A673 (cell line): ENCODE measurements at regions of chr1 and their contacts with region 1.

Region 1: DNA sequence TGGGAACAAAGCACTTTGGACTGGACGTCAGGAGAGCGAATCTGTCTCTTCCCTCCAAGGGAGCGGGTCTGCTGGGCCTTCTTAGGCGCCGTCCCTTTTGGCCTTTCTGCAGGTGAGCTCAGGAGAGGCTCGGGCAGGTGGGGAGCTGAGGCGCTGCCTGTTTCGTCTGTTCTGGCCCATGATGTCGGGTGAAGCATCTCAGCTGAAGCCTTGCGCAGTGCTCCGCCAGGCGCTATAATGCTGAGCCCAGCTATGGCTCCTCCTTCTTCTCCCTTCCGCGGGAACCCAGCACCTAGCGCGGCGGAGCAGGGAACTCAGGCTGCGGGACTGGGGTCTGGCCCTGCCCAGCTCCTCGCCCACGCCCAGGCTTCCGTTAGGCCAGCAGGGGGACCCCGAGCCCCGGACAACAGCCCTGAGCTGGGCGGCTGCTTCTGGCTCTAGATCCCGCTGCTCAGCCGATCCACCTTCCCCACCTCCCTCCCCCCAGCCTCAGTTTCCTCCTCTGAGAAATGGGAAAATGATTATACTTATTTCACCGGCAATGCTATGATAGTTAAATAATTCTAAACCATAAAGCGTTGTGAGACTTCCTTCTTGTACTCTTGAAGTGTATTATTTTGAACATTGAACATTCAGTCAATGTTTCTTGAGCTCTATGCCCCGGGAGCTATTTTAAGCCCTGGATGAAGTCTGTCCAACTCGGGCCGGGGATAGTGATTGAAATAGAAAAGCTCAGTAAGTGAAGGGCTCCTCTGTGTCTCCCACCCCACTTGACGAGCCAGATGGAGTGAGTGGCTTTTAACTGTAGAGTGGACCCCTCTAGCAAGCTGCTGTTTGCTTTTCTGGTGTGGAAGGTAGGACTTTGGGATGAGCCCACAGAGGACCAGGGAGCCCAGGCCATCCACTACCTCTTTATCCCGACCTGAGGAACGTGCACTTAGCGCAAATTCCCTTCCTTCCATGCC is 9.6 kb upstream of the ADORA1 start:
- DNase-seq: peak; percentile 74
- H3K4me3 ChIP-seq: no peak overlapping the region
- H3K27ac ChIP-seq: no peak overlapping the region
- H3K4me1 ChIP-seq: peaks cover 2% of the 10 kb centered on the region
- H3K27me3 ChIP-seq: peaks cover 45% of the 10 kb centered on the region
- CTCF ChIP-seq: peak; percentile 66

Region 2: GRCh38 chr1:202957733-202958543 is 160.0 kb before region 1 on chr1 and contains the start of gene ADIPOR1:
- CTCF ChIA-PET with region 1: no interaction called
- POLR2A ChIA-PET with region 1: no interaction called
- intact Hi-C with region 1: no loop called
- DNase-seq: peak; percentile 91
- H3K4me3 ChIP-seq: peak within 1 kb of the TSS; percentile 99
- H3K27ac ChIP-seq: peak within 1 kb of the TSS; percentile 97
- H3K4me1 ChIP-seq: peaks cover 13% of the 10 kb centered on the region
- H3K27me3 ChIP-seq: no peaks in the 10 kb centered on the region
- CTCF ChIP-seq: no peak
- total RNA-seq, gene ADIPOR1: 79.1 and 81.4 TPM in 2 replicates

Region 3: GRCh38 chr1:203172128-203173010 is 54.5 kb after region 1 on chr1:
- CTCF ChIA-PET with region 1: interaction called, 6 read pairs
- POLR2A ChIA-PET with region 1: no interaction called
- intact Hi-C with region 1: loop called (anchors 5 kb)
- DNase-seq: peak; percentile 73
- H3K4me3 ChIP-seq: no peak overlapping the region
- H3K27ac ChIP-seq: no peak overlapping the region
- H3K4me1 ChIP-seq: peaks cover 5% of the 10 kb centered on the region
- H3K27me3 ChIP-seq: no peaks in the 10 kb centered on the region
- CTCF ChIP-seq: peak; percentile 90

Region 4: GRCh38 chr1:203216274-203217138 is 98.6 kb after region 1 on chr1:
- CTCF ChIA-PET with region 1: interaction called, 21 read pairs
- POLR2A ChIA-PET with region 1: no interaction called
- intact Hi-C with region 1: loop called (anchors 1 kb)
- DNase-seq: peak; percentile 81
- H3K4me3 ChIP-seq: no peak overlapping the region
- H3K27ac ChIP-seq: no peak overlapping the region
- H3K4me1 ChIP-seq: no peaks in the 10 kb centered on the region
- H3K27me3 ChIP-seq: no peaks in the 10 kb centered on the region
- CTCF ChIP-seq: peak; percentile 74